CD8-positive, alpha-beta T cell (primary cell): ENCODE measurements at regions of chr9 and their contacts with region 1.

Region 1: GRCh38 chr9:107243751-107244150 is 39.3 kb upstream of the RAD23B start:
- DNase-seq: peak in 6 of 9 experiments; percentile 3 to 32 (median 18)
- ATAC-seq: peak; percentile 77
- H3K4me3 ChIP-seq: no peak overlapping the region
- H3K4me3 Mint-ChIP-seq: no peak overlapping the region
- H3K27ac ChIP-seq: no peak overlapping the region
- H3K27ac Mint-ChIP-seq: no peak overlapping the region
- H3K4me1 ChIP-seq: peaks cover 5% of the 10 kb centered on the region
- H3K4me1 Mint-ChIP-seq: peaks cover 13% of the 10 kb centered on the region
- H3K27me3 ChIP-seq: no peaks in the 10 kb centered on the region
- H3K27me3 Mint-ChIP-seq: no peaks in the 10 kb centered on the region
- CTCF ChIP-seq: no peak

Region 2: GRCh38 chr9:107190061-107190935 is 53.5 kb before region 1 on chr9:
- CTCF ChIA-PET with region 1: no interaction called
- POLR2A ChIA-PET with region 1: no interaction called
- intact Hi-C with region 1: loop called in 1 of 2 experiments (anchors 5 kb)
- DNase-seq: no peak
- ATAC-seq: no peak
- H3K4me3 ChIP-seq: no peak overlapping the region
- H3K4me3 Mint-ChIP-seq: no peak overlapping the region
- H3K27ac ChIP-seq: no peak overlapping the region
- H3K27ac Mint-ChIP-seq: no peak overlapping the region
- H3K4me1 ChIP-seq: no peaks in the 10 kb centered on the region
- H3K4me1 Mint-ChIP-seq: no peaks in the 10 kb centered on the region
- H3K27me3 ChIP-seq: peaks cover 0 to 3% of the 10 kb centered on the region in 2 experiments
- H3K27me3 Mint-ChIP-seq: peaks cover 7% of the 10 kb centered on the region
- CTCF ChIP-seq: no peak

Region 3: DNA sequence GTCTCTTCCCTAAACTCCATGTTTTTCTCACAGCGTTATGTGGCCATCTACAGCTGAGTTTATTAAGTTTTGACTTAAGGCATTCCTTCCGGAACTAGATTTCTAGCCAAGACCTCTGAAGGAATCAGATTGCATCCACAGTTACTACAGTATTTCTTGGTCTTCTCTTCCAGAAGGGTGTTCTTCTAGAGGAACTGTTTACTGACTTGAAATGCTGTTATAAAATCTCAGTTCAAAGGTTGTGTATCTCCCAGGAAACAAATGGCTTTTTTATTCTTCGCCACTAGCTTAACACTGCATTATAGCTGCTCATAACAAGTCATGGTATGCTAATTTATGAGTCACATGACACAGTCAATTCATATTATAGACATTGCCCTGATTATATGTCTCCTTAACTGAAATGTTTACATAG is 16.0 kb before region 1 on chr9:
- CTCF ChIA-PET with region 1: interaction called, 12 read pairs
- POLR2A ChIA-PET with region 1: interaction called, 3 read pairs
- intact Hi-C with region 1: no loop called
- DNase-seq: no peak
- ATAC-seq: no peak
- H3K4me3 ChIP-seq: no peak overlapping the region
- H3K4me3 Mint-ChIP-seq: no peak overlapping the region
- H3K27ac ChIP-seq: no peak overlapping the region
- H3K27ac Mint-ChIP-seq: no peak overlapping the region
- H3K4me1 ChIP-seq: no peaks in the 10 kb centered on the region
- H3K4me1 Mint-ChIP-seq: no peaks in the 10 kb centered on the region
- H3K27me3 ChIP-seq: no peaks in the 10 kb centered on the region
- H3K27me3 Mint-ChIP-seq: peaks cover 21% of the 10 kb centered on the region
- CTCF ChIP-seq: no peak

Region 4: DNA sequence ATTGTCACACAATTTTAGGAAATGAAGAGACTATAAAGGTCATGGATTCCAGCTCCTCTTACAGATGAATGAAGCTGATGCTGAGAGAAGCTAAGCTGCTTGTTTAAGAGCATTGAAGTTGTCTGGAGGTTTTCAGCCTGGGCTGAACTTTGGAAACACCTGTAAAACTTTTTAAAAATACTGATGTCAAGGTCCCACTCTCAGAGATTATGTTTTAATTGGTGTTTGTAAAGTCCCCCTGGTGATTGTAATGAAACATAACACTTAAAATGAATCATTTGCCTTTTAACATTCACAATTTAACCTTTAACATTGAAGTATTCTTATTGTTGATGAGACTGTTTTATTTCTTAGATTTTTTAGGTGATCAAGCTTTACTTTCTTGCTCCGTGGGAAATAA is 55.7 kb after region 1 on chr9:
- CTCF ChIA-PET with region 1: interaction called, 7 read pairs
- POLR2A ChIA-PET with region 1: no interaction called
- intact Hi-C with region 1: loop called (anchors 2 kb)
- DNase-seq: peak in 2 of 9 experiments; percentile 19 to 47
- ATAC-seq: peak; percentile 65
- H3K4me3 ChIP-seq: no peak overlapping the region
- H3K4me3 Mint-ChIP-seq: no peak overlapping the region
- H3K27ac ChIP-seq: no peak overlapping the region
- H3K27ac Mint-ChIP-seq: peak overlapping the region; percentile 57
- H3K4me1 ChIP-seq: peaks cover 25% of the 10 kb centered on the region
- H3K4me1 Mint-ChIP-seq: peaks cover 40% of the 10 kb centered on the region
- H3K27me3 ChIP-seq: no peaks in the 10 kb centered on the region
- H3K27me3 Mint-ChIP-seq: no peaks in the 10 kb centered on the region
- CTCF ChIP-seq: peak; percentile 68